AG04450 (cell line): ENCODE measurements at regions of chr4 and their contacts with region 1.

Region 1: DNA sequence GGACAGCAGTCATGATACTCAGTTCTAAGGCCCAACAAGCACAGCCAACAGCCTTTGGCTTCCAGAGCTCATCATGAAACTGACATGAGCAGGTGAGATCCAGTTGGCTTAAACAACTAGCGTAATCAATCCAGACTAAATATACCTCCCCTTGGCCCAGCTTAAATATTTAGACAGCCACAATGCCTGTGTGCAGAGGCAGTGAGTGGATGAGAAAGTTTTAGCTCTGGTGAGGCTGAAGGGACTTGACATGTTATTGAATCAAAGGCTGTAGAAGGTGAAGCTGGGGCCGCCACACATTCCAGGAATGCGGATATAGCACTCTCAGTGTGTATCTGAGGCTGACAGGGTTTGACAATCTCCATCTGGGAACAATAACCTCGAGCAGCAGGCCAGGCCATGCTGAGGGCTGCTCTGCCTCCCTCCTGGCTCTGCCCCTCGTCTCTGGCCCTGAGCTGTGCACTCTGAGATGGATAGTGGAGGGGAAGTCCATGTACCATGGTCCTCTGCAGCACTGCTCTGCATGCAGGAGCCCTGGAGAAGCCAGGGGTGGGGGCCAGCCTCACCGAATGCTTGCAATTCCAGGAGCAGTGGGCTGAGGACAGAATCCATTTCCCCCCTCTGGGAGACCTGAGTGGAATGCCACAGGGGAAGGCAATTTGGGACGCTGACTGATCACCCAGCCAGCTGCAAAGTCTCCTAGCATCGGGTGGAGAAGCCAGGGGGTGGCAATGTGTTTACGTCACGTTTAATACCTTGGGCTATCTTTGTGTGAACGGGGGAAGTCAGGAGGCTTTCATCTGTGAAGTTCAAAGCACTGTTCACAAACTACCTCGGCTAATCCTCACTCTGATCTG is 37.3 kb upstream of the RASL11B start:
- DNase-seq: peak; percentile 92
- H3K4me3 ChIP-seq: no peak overlapping the region
- H3K27ac ChIP-seq: peak overlapping the region; percentile 57
- H3K27me3 ChIP-seq: no peaks in the 10 kb centered on the region
- CTCF ChIP-seq: no peak

Region 2: GRCh38 chr4:52643785-52644244 is 181.0 kb before region 1 on chr4:
- CTCF ChIA-PET with region 1: interaction called, 10 read pairs
- POLR2A ChIA-PET with region 1: no interaction called
- DNase-seq: peak; percentile 20
- H3K4me3 ChIP-seq: no peak overlapping the region
- H3K27ac ChIP-seq: no peak overlapping the region
- H3K27me3 ChIP-seq: no peaks in the 10 kb centered on the region
- CTCF ChIP-seq: no peak

Region 3: DNA sequence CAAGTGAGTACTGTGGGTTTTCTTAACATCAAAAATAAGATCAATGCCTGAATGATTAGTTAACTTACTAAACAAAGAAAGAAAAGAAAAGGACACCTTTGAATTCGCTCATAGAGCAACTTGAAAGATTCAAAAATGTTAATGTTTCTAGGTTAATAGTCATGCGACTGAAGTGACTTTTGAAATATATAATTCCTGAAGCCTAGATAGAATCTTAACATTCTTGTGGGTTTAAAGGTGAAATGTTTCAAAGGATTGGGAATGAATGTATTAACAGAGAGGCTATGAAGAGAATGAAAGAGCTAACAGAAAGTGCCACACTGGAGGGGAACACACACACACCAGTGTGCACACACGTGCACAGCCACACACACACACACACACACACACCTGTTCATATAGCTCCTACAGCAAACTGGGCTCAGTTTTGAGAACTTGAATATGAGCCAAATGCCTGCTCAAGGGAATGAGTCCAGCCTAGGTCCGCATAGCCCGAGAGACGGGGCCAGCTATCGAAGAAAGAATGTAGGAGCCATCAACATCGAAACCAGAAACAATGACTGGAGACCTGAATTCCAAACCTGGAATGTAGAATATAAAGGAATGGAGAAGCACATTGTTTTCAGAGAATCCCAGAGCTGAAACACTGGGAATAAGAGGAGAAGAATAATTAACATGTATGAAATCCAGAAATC is 36.2 kb before region 1 on chr4:
- CTCF ChIA-PET with region 1: no interaction called
- POLR2A ChIA-PET with region 1: no interaction called
- DNase-seq: no peak
- H3K4me3 ChIP-seq: no peak overlapping the region
- H3K27ac ChIP-seq: no peak overlapping the region
- H3K27me3 ChIP-seq: no peaks in the 10 kb centered on the region
- CTCF ChIP-seq: no peak

Region 4: GRCh38 chr4:52894443-52894842 is 69.6 kb after region 1 on chr4:
- CTCF ChIA-PET with region 1: no interaction called
- POLR2A ChIA-PET with region 1: interaction called, 14 read pairs
- DNase-seq: no peak
- H3K4me3 ChIP-seq: no peak overlapping the region
- H3K27ac ChIP-seq: no peak overlapping the region
- H3K27me3 ChIP-seq: no peaks in the 10 kb centered on the region
- CTCF ChIP-seq: no peak